ENCODE measurements at regions of chr11 and their contacts with region 1.

Region 1: DNA sequence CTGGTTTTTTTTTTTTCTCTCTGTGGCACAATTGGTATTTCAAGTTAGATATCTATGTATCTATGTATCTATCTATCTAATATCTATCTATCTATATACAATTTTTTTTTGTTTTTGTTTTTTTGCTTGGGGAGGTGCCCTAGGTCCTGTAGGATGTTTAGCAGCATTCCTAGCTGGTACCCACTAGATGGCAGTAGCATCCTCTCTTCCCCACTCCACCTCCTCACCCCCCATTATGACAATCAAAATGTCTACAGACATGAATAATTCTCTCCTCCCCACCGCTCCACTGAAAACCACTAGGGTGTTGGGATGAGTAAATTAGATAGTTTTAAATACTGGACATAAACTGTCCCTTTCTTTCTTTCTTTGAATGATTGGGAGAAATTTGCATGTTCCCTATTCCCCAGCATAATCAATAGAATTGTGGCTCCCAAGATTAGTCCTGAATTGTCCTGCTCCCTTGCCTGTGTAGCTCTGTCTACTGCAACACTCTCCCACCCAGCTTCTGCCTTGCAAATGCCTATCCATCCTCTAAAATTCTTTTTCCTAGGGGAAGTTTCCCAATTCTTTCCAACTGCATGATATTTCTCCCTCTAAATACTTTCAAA is 1152.4 kb downstream of the LRRC4C start:
- DNase-seq: no peak
- ATAC-seq: no peak
- H3K4me3 Mint-ChIP-seq: no peak overlapping the region
- H3K27ac Mint-ChIP-seq: no peak overlapping the region
- H3K4me1 Mint-ChIP-seq: no peaks in the 10 kb centered on the region
- H3K27me3 Mint-ChIP-seq: no peaks in the 10 kb centered on the region
- CTCF ChIP-seq: peak; percentile 21

Region 2: DNA sequence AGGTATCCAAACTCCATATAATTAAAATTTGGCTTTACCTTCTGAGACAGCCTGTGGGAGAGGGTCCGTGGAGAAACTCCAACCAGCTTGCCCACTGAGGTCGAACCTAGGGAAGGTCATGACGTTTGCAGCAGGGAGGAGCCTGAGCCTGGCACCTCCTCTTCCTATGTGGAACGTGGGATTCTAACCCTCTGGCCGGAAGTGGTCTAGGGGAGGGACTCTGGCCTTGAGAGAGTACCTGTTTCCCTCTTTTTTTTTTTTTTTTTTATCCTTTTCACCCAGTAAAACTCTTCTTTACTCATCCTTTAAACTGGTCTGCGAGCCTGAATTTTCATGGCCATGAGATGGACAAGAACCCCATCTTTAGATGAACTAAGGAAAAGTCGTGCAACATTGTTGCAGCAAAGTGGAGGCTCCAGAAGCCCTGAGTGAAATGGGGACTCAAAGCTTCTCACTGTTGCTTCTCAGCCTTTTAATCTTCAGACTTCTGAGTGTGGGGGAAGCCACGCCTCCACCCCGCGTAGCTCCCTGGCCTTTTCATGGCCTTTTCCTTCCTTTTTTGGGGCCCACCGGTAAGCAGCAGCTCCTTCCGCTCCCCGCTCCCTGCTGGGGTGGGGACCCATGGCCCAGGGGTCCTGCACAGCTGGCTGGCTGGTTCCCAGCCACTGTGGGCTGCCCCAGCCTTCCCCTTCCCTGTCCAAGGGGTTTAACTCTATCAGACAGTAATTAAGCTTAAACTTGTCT is 207.4 kb before region 1 on chr11:
- CTCF ChIA-PET with region 1: no interaction called
- POLR2A ChIA-PET with region 1: no interaction called
- intact Hi-C with region 1: no loop called
- DNase-seq: no peak
- ATAC-seq: no peak
- H3K4me3 Mint-ChIP-seq: no peak overlapping the region
- H3K27ac Mint-ChIP-seq: no peak overlapping the region
- H3K4me1 Mint-ChIP-seq: no peaks in the 10 kb centered on the region
- H3K27me3 Mint-ChIP-seq: no peaks in the 10 kb centered on the region
- CTCF ChIP-seq: no peak

Region 3: DNA sequence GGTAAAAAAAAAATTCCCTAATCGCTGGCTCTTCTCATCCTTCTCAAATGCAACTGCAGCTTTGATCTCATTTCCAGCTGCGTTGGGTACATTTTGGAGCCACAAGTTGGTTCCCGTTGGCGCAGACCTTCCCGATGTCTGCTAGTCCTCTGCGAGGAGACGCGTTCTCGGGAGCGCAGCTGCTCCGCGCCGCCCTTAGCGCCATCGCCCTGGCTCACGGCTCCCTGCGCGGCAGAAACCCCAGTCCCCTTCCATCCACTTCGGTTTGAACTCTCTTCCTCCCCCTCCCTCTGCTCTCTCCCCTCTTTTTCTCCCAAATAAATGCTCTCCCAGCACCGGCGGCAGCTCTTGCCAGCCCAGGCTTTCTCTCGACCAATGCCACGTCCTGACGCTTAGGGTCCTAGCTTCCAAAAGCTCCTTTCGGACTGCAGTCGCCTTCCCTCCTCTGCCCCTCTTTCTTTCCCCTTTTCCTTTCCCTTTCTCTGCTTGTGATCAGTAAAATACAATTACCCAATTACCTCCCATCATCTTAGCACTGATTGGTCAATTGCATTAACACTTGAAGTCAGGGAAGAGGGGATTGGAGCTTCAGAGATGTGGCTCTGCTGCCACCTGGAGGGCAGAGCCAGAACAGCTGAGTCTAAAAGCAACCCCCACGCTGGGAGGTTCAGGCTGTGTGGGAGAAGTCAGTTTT is 13.2 kb before region 1 on chr11:
- CTCF ChIA-PET with region 1: interaction called, 22 read pairs
- POLR2A ChIA-PET with region 1: no interaction called
- intact Hi-C with region 1: no loop called
- DNase-seq: peak; percentile 50
- ATAC-seq: peak; percentile 73
- H3K4me3 Mint-ChIP-seq: peak overlapping the region; percentile 19
- H3K27ac Mint-ChIP-seq: no peak overlapping the region
- H3K4me1 Mint-ChIP-seq: peaks cover 4% of the 10 kb centered on the region
- H3K27me3 Mint-ChIP-seq: peaks cover 14% of the 10 kb centered on the region
- CTCF ChIP-seq: peak; percentile 71